Activated B cell treated with CpG ODN at 0.5 μM for 24 hours (primary cell): ENCODE measurements at regions of chr22 and their contacts with region 1.

Region 1: GRCh38 chr22:45263463-45264269 is 21.1 kb upstream of the UPK3A start:
- DNase-seq: peak; percentile 78
- ATAC-seq: peak; percentile 97
- H3K4me3 Mint-ChIP-seq: peak overlapping the region; percentile 77
- H3K27ac Mint-ChIP-seq: peak overlapping the region; percentile 81
- H3K4me1 Mint-ChIP-seq: peaks cover 52% of the 10 kb centered on the region
- H3K27me3 Mint-ChIP-seq: no peaks in the 10 kb centered on the region
- CTCF ChIP-seq: no peak

Region 2: DNA sequence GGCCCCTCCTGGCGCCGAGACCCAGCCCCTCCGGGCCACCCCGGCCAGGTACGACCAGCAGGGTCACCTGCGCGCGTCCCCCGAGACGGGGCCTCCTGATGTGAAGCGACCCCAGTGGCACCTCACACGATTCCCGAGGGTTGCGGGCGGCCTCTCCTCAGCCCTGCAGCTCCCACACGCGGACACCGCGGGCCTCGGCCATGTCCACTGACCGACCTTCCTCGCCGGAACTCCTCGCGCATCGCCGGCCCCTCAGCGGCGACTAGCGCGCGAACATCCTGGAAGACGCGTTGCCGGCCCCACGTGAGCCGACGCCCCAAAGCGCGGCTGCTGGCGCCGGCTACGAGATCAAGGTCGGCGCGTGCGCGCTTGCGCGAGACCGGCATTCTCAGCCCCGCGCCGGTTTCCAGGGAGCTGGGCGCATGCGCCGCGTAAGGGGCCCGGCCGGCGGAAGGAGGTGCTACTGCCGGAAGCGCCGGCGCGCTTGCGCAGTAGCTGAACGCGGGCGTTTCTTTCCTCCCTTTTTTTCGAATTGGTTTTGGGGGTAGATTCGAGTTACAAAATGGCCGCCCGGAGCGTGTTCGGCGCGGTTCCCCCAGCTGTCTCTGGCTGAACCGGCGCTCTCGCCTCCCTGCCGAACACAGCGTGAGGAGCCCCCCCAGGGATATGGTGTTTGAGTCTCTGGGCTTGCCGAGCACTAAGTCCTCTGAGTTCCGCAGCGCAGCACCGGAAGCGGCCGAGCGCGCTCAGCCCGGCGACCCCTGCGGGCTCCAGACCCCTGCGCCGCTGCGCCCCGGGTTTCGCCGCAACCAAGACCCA is 100.0 kb before region 1 on chr22 and contains the start of gene NUP50:
- CTCF ChIA-PET with region 1: no interaction called
- POLR2A ChIA-PET with region 1: interaction called, 20 read pairs
- intact Hi-C with region 1: loop called (anchors 1 kb)
- DNase-seq: peak; percentile 97
- ATAC-seq: peak; percentile 78
- H3K4me3 Mint-ChIP-seq: peak within 1 kb of the TSS; percentile 97
- H3K27ac Mint-ChIP-seq: peak within 1 kb of the TSS; percentile 90
- H3K4me1 Mint-ChIP-seq: peaks cover 38% of the 10 kb centered on the region
- H3K27me3 Mint-ChIP-seq: no peaks in the 10 kb centered on the region
- CTCF ChIP-seq: no peak
- total RNA-seq, gene NUP50: 91.2 and 112 TPM in 2 replicates

Region 3: DNA sequence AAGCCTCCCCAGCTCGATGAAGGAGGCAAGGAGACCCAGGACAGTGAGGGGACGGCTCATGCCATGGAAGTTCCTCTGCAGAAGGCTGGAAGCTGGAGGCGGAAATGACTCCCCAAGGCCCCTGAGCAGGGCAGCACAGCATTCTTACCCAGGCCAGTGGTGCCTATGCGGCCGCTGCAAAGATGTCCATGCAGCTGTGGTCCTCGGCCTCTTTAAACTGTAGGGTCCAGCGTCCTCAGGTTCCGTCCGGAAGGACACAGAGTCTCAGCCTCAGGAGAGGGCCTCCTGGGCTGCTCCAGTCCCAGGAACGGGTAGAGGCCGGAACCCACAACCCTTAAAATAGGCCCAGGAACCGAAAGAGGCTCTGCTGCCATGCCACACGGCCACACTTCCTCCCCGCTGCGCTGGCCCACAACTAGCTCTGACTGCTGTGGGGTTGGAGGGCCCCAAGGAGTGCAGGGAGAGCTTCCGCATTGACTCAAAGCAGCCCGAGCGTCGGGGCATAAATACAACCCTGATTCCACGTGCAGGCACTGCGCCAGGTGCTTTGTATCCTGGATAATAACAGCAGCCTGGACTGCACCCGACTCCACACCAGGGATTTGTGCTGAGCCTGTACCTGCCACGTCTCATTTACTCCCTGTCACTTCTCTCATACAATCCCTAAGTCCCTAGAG is 28.4 kb before region 1 on chr22:
- CTCF ChIA-PET with region 1: interaction called, 5 read pairs
- POLR2A ChIA-PET with region 1: interaction called, 27 read pairs
- intact Hi-C with region 1: loop called (anchors 1 kb)
- DNase-seq: peak; percentile 64
- ATAC-seq: peak; percentile 93
- H3K4me3 Mint-ChIP-seq: peak overlapping the region; percentile 70
- H3K27ac Mint-ChIP-seq: peak overlapping the region; percentile 88
- H3K4me1 Mint-ChIP-seq: peaks cover 86% of the 10 kb centered on the region
- H3K27me3 Mint-ChIP-seq: no peaks in the 10 kb centered on the region
- CTCF ChIP-seq: no peak

Region 4: DNA sequence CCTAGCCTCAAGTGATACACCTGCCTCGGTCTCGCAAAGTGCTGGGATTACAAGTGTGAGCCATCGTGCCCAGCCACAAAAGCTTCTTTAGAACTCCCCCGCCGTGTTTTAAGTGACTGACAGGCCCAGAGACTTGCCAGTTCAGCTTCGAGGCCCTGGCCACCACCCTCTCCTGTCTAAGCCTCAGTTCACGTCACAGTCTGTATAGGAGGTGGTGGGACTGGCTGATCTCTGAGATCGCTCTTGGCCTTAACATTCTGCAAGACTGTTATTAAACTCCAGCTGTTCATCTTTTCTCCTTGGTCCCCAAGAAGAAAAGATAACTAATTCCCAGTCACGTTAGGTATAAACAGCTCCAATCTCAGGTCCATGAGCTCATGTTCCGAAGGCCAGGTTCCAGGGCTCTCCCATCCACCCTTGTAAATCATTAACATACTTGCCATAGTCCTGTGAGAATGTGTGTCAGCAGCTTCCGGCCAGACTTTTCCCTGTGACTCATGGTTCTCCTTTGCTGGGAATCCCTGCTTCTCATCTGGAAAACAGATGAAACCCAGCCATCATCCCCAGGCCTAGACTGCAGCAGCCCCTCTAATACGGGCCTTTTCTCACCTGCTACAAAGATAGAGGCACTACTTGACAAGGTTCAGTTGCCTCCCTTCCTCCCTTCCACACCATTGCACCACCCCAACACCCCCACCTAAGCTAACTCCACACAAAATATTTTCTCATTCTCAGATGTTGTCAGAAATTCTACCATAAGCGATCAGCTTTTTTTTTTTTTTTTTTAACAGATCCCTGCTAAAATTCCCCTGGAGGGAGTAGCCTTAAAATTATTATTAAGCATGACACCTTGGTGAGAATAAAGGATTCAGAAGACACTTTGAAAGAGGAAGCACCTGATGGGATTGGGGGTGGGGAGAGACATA is 17.3 kb before region 1 on chr22:
- CTCF ChIA-PET with region 1: no interaction called
- POLR2A ChIA-PET with region 1: interaction called, 8 read pairs
- intact Hi-C with region 1: loop called (anchors 1 kb)
- DNase-seq: no peak
- ATAC-seq: peak; percentile 53
- H3K4me3 Mint-ChIP-seq: peak overlapping the region; percentile 17
- H3K27ac Mint-ChIP-seq: peak overlapping the region; percentile 87
- H3K4me1 Mint-ChIP-seq: peaks cover 43% of the 10 kb centered on the region
- H3K27me3 Mint-ChIP-seq: no peaks in the 10 kb centered on the region
- CTCF ChIP-seq: no peak